ENCODE measurements at regions of chr3 and their contacts with region 1.

Region 1: GRCh38 chr3:111978493-111979433 is at the start of gene ABHD10:
- DNase-seq: peak; percentile 90 to 99 (median 97)
- ATAC-seq: peak; percentile 94
- H3K4me3 ChIP-seq: peak within 1 kb of the TSS; percentile 89
- H3K4me3 Mint-ChIP-seq: peak within 1 kb of the TSS; percentile 94
- H3K27ac ChIP-seq: peak within 1 kb of the TSS; percentile 80 to 85
- H3K27ac Mint-ChIP-seq: peak within 1 kb of the TSS; percentile 95
- H3K4me1 ChIP-seq: peaks cover 31% of the 10 kb centered on the region
- H3K4me1 Mint-ChIP-seq: peaks cover 44% of the 10 kb centered on the region
- H3K27me3 ChIP-seq: no peaks in the 10 kb centered on the region
- H3K27me3 Mint-ChIP-seq: no peaks in the 10 kb centered on the region
- CTCF ChIP-seq: no peak
- total RNA-seq, gene ABHD10: 19.8 to 26.0 TPM

Region 2: DNA sequence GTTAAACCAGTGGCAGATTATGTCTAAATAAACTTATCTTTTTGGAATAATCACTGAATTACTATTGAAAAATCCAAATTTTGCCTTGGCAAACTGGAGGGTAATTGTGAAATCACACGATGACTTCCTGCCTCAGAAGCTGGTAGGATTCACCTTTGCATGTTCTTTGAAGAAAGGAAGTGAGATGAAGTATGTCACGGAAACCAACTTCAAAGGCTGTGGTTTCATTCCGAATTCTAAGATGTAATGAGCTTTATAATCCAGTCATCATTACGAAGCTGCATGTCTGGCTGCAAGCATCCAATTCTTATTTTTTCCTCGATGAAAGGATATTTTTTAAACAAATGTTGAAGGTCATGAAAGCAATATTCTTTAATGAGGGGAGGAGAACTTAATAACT is 368.6 kb before region 1 on chr3:
- CTCF ChIA-PET with region 1: no interaction called
- POLR2A ChIA-PET with region 1: no interaction called
- intact Hi-C with region 1: loop called in 1 of 2 experiments (anchors 2 kb)
- DNase-seq: peak in 6 of 9 experiments; percentile 16 to 92 (median 46)
- ATAC-seq: peak; percentile 79
- H3K4me3 ChIP-seq: no peak overlapping the region
- H3K4me3 Mint-ChIP-seq: peak overlapping the region; percentile 64
- H3K27ac ChIP-seq: peak overlapping the region; percentile 14 to 77
- H3K27ac Mint-ChIP-seq: peak overlapping the region; percentile 94
- H3K4me1 ChIP-seq: peaks cover 43% of the 10 kb centered on the region
- H3K4me1 Mint-ChIP-seq: peaks cover 70% of the 10 kb centered on the region
- H3K27me3 ChIP-seq: no peaks in the 10 kb centered on the region
- H3K27me3 Mint-ChIP-seq: no peaks in the 10 kb centered on the region
- CTCF ChIP-seq: no peak

Region 3: DNA sequence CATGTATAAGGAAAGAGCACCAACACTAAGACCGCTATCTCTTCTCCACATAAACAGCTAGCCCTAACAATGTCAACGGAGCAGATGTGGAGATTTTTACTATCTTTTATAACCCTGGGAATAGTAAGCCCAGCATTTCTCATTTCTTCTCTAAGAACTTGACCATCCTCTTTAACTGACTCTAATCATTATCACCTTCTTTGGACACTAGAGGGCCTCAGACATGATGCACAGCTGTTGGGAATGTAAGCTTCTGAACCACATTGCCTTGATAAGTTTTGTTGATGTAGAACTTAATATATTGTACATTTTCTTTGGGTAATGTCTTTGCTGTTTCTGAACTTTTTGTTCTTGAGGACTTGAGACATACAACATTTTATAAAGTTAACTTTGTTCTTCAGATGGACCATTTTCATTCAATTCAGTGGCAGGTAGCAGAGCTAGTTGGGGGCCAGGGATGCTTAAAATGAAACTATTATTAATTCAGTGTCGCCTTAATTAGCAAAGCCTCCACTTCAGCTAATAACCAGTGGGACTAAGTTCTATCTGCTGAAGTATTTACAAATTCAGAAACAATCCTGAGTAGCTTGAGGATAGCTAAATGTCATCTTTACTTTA is 10.4 kb after region 1 on chr3:
- CTCF ChIA-PET with region 1: interaction called, 21 read pairs
- POLR2A ChIA-PET with region 1: interaction called, 6 read pairs
- intact Hi-C with region 1: no loop called
- DNase-seq: peak in 2 of 9 experiments; percentile 53 to 64
- ATAC-seq: peak; percentile 72
- H3K4me3 ChIP-seq: no peak overlapping the region
- H3K4me3 Mint-ChIP-seq: peak overlapping the region; percentile 38
- H3K27ac ChIP-seq: no peak overlapping the region
- H3K27ac Mint-ChIP-seq: no peak overlapping the region
- H3K4me1 ChIP-seq: peaks cover 3% of the 10 kb centered on the region
- H3K4me1 Mint-ChIP-seq: peaks cover 39% of the 10 kb centered on the region
- H3K27me3 ChIP-seq: no peaks in the 10 kb centered on the region
- H3K27me3 Mint-ChIP-seq: no peaks in the 10 kb centered on the region
- CTCF ChIP-seq: peak; percentile 61

Region 4: DNA sequence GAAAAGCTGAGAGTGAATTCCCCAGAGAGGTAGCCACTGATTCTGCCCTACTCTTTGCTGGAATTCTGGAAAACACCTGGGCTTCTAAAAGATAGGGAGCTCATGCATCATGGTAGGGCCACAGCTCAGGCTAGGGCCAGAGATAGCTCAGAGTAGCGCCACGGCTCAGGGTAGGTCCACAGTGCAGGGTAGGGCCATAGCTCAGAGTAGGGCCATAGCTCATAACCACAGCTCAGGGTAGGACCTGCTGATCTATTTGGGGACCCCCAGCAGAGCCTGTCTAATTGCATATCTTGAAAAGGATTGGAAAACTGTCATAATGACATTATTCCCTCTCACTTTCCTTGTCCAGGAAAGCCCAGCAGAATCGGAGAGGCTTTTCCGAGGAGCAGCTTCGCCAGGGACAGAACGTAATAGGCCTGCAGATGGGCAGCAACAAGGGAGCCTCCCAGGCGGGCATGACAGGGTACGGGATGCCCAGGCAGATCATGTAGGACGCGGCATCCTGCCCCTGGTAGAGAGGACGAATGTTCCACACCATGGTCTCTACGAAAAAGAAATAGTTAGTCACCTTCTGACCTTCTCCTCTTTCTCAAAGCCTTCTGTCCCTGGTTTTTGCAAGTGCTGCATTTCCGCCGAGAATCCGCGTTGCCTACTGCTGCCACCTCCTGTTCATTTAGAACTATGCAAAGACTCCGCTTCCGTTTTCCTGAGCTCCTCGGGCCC is 34.5 kb after region 1 on chr3:
- CTCF ChIA-PET with region 1: interaction called, 7 read pairs
- POLR2A ChIA-PET with region 1: interaction called, 12 read pairs
- intact Hi-C with region 1: no loop called
- DNase-seq: peak; percentile 9 to 72 (median 51)
- ATAC-seq: peak; percentile 79
- H3K4me3 ChIP-seq: no peak overlapping the region
- H3K4me3 Mint-ChIP-seq: no peak overlapping the region
- H3K27ac ChIP-seq: no peak overlapping the region
- H3K27ac Mint-ChIP-seq: no peak overlapping the region
- H3K4me1 ChIP-seq: peaks cover 2% of the 10 kb centered on the region
- H3K4me1 Mint-ChIP-seq: peaks cover 6% of the 10 kb centered on the region
- H3K27me3 ChIP-seq: no peaks in the 10 kb centered on the region
- H3K27me3 Mint-ChIP-seq: no peaks in the 10 kb centered on the region
- CTCF ChIP-seq: peak; percentile 69

Region 5: DNA sequence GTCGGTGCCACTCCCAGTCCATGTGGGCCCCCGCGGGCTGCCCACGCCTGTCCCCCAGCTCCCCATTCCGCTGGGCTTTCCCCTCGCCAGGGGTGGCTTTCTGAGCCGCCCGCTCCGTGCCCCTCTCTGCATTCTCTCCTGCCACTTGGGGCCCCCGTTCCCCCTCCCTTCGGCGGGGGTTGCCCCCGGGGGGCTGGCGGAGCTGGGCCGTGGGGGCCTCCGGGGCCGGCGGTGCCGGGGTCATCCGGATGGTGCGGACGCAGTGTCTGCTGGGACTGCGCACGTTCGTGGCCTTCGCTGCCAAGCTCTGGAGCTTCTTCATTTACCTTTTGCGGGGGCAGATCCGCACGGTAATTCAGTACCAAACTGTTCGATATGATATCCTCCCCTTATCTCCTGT is 1906.3 kb after region 1 on chr3:
- CTCF ChIA-PET with region 1: no interaction called
- POLR2A ChIA-PET with region 1: no interaction called
- intact Hi-C with region 1: no loop called
- DNase-seq: peak in 1 of 9 experiments; percentile 0
- ATAC-seq: no peak
- H3K4me3 ChIP-seq: no peak overlapping the region
- H3K4me3 Mint-ChIP-seq: no peak overlapping the region
- H3K27ac ChIP-seq: no peak overlapping the region
- H3K27ac Mint-ChIP-seq: no peak overlapping the region
- H3K4me1 ChIP-seq: no peaks in the 10 kb centered on the region
- H3K4me1 Mint-ChIP-seq: no peaks in the 10 kb centered on the region
- H3K27me3 ChIP-seq: no peaks in the 10 kb centered on the region
- H3K27me3 Mint-ChIP-seq: no peaks in the 10 kb centered on the region
- CTCF ChIP-seq: no peak

Measured in CD8-positive, alpha-beta T cell (primary cell).